Posterior cingulate gyrus (tissue), 11 donors: ENCODE measurements at regions of chr13 and their contacts with region 1.

Region 1: DNA sequence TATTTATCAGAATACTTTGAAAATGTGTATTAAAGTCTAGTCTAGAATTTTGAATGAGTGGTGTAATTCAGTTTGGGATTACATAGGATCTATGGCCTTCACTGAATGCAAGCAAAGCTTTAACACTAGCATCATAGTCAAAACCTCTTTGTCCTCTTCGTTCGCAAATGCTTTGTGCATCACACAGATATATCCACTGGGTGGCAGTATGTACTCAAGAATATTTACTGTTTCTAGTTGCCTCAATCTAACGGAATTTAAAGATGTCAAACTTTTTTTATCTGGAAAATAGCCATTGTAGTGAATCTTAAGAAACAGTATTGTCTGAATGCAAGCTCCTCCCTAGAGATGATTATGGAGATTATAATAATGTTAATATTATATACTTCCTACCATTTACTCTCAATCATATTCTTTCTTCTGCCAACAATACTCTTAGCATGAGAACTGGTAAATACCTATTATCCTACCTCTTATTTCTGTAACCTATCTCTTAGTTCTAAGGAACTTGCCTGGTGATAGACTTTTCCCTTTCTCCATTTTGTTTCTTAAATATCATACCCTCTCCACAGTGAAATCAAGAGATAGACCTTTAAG is 25.8 kb downstream of the LACC1 start:
- DNase-seq: peak in 1 of 10 donors; percentile 22

Region 2: GRCh38 chr13:44050450-44051063 is 145.0 kb after region 1 on chr13:
- intact Hi-C with region 1: loop called (anchors 5 kb)
- DNase-seq: no peak

Region 3: GRCh38 chr13:44153496-44153895 is 248.0 kb after region 1 on chr13:
- intact Hi-C with region 1: loop called (anchors 5 kb)
- DNase-seq: peak in 1 of 10 donors; percentile 32

Region 4: DNA sequence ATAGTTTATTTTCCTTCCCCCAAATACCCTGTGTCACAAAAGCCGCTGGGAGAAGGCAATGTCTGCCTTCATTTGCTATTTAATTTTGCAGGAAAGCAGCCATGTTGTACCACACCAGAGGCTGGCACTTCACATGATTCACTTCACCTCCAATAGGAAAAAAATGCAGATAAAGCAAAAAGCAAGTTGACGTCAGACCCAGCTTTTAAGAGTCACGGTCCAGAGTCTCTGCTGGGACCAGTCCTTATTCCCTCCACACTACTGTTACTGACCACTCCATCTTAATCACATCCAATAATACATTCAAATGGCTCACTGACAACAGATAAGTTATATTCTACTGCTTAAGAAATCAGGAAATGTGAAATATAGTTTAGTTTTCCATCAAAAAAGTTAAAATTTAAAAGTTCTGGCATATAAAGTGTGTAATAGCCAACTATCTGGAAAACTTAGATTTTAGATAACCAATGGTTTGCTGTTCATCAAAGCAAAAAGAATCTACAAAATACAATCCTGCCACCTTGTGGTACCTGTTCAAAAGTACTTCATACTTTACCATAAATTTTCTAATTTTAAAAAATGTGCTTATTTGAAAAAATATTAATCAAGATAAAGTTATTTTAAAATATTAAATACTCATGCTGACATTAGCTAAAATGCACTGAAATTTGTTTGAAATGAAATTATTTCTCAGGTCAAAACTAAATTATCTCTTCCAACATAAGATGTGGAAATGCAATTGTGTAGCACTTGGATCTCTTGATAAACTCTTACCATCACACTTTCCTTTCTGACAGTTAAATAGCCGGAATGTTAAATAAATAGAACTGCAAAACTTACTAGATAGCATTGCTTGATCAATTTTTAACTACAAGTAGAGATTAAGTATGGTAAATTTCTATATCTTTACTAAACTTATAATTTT is 565.4 kb after region 1 on chr13:
- intact Hi-C with region 1: loop called (anchors 10 kb)
- DNase-seq: no peak